Transverse colon (tissue), 4 donors: ENCODE measurements at regions of chr3 and their contacts with region 1.

Region 1: DNA sequence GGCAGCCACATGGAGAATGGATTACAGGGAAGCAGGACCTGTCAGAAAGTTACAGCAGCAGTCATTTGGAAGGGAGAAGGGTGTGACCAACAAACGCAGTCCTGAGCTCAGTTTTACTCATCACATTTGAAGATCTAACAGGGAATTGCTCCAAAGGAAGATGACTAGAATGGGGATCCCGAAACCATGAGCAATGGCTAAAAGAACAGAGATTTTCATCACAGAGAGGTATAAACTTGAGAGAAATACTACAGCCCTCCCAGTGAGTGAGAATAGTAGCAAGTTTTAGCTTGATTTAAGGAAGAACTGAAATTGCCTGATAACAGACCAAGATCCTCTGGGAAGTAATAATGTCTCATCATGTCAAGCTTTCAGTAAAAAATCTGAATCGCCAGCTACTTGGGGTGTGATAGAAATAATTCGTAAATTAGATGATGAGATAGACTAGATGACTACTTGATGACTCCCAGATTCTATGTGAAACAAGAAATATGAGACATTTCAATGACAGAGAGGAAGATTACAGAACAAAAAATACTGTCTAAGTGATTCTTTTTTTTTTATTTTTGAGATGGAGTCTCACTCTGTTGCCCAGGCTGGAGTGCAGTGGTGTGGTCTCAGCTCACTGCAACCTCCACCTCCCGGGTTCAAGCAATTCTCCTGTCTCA is 16.9 kb downstream of the CD47 start:
- DNase-seq: no peak
- H3K4me3 ChIP-seq: no peak overlapping the region
- H3K27ac ChIP-seq: no peak overlapping the region
- H3K4me1 ChIP-seq: no peaks in the 10 kb centered on the region
- H3K27me3 ChIP-seq: no peaks in the 10 kb centered on the region
- CTCF ChIP-seq: no peak
- EP300 ChIP-seq: no peak
- POLR2A ChIP-seq: no peak

Region 2: GRCh38 chr3:108040481-108040880 is 33.4 kb before region 1 on chr3:
- in situ Hi-C with region 1: no loop called
- intact Hi-C with region 1: loop called (anchors 1 kb)
- DNase-seq: no peak
- H3K4me3 ChIP-seq: no peak overlapping the region
- H3K27ac ChIP-seq: no peak overlapping the region
- H3K4me1 ChIP-seq: no peaks in the 10 kb centered on the region
- H3K27me3 ChIP-seq: no peaks in the 10 kb centered on the region
- CTCF ChIP-seq: no peak
- EP300 ChIP-seq: no peak
- POLR2A ChIP-seq: no peak